Activated naive CD4-positive, alpha-beta T cell treated with anti-CD3 and anti-CD28 coated beads for 36 hours (primary cell): ENCODE measurements at regions of chr13 and their contacts with region 1.

Region 1: GRCh38 chr13:97855570-97856303 is 97.7 kb upstream of the IPO5 start:
- DNase-seq: peak; percentile 30
- H3K4me3 Mint-ChIP-seq: no peak overlapping the region
- H3K27ac Mint-ChIP-seq: no peak overlapping the region
- H3K4me1 Mint-ChIP-seq: no peaks in the 10 kb centered on the region
- H3K27me3 Mint-ChIP-seq: peaks cover 13% of the 10 kb centered on the region

Region 2: GRCh38 chr13:97719736-97720135 is 136.0 kb before region 1 on chr13:
- CTCF ChIA-PET with region 1: no interaction called
- intact Hi-C with region 1: no loop called
- DNase-seq: no peak
- H3K4me3 Mint-ChIP-seq: no peak overlapping the region
- H3K27ac Mint-ChIP-seq: no peak overlapping the region
- H3K4me1 Mint-ChIP-seq: no peaks in the 10 kb centered on the region
- H3K27me3 Mint-ChIP-seq: peaks cover 6% of the 10 kb centered on the region

Region 3: GRCh38 chr13:97911311-97912128 is 55.8 kb after region 1 on chr13:
- CTCF ChIA-PET with region 1: interaction called, 7 read pairs
- intact Hi-C with region 1: loop called (anchors 2 kb)
- DNase-seq: peak; percentile 24
- H3K4me3 Mint-ChIP-seq: no peak overlapping the region
- H3K27ac Mint-ChIP-seq: no peak overlapping the region
- H3K4me1 Mint-ChIP-seq: no peaks in the 10 kb centered on the region
- H3K27me3 Mint-ChIP-seq: peaks cover 22% of the 10 kb centered on the region

Region 4: DNA sequence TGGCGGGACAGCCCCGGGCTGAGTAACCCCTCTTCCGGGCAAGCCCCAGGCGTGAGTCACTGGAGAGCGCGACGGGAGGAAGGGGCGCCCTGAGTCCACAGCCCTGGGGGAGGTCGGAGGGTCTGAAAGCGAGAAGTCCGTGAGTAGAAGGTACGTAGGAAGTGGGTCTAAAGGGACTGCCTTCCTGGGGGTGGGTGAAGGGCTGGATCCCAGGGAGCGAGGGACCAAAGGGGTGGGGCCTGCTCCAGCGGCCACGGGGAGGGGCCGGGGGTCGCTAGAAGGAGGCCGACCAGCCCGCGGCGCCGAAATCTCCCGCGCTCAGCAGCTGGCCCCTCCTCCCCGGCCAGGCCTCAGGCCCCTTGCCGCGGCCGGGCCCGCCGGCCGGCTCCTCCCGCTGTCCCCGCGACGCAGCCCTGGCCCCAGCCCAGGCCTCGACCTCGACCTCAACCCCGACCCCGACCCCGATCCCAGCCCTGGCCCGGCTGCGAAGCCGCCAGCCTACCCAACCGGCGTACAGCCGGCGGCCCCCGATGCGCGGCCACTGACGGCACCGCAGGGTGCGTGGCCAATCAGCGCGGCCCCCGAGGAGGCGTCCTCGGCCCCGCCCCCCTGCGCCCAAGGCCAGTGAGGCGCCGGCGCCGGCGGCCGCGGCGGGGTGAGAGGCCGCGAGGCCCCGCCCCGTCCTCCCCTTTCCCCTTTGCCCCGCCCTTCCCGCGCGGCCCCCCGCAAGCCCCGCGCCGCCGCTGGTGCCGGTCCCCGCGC is 120.3 kb after region 1 on chr13:
- CTCF ChIA-PET with region 1: no interaction called
- intact Hi-C with region 1: loop called (anchors 2 kb)
- DNase-seq: peak; percentile 89
- H3K4me3 Mint-ChIP-seq: peak overlapping the region; percentile 92
- H3K27ac Mint-ChIP-seq: peak overlapping the region; percentile 97
- H3K4me1 Mint-ChIP-seq: peaks cover 28% of the 10 kb centered on the region
- H3K27me3 Mint-ChIP-seq: no peaks in the 10 kb centered on the region

Region 5: GRCh38 chr13:98349731-98350305 is 494.1 kb after region 1 on chr13:
- CTCF ChIA-PET with region 1: interaction called, 4 read pairs
- intact Hi-C with region 1: loop called (anchors 1 kb)
- DNase-seq: no peak
- H3K4me3 Mint-ChIP-seq: no peak overlapping the region
- H3K27ac Mint-ChIP-seq: no peak overlapping the region
- H3K4me1 Mint-ChIP-seq: no peaks in the 10 kb centered on the region
- H3K27me3 Mint-ChIP-seq: no peaks in the 10 kb centered on the region

Region 6: GRCh38 chr13:98429977-98430736 is 574.4 kb after region 1 on chr13:
- CTCF ChIA-PET with region 1: interaction called, 4 read pairs
- intact Hi-C with region 1: loop called (anchors 1 kb)
- DNase-seq: no peak
- H3K4me3 Mint-ChIP-seq: no peak overlapping the region
- H3K27ac Mint-ChIP-seq: no peak overlapping the region
- H3K4me1 Mint-ChIP-seq: no peaks in the 10 kb centered on the region
- H3K27me3 Mint-ChIP-seq: peaks cover 2% of the 10 kb centered on the region

Region 7: GRCh38 chr13:98842864-98843481 is 987.2 kb after region 1 on chr13:
- CTCF ChIA-PET with region 1: no interaction called
- intact Hi-C with region 1: loop called (anchors 2 kb)
- DNase-seq: peak; percentile 85
- H3K4me3 Mint-ChIP-seq: no peak overlapping the region
- H3K27ac Mint-ChIP-seq: no peak overlapping the region
- H3K4me1 Mint-ChIP-seq: peaks cover 6% of the 10 kb centered on the region
- H3K27me3 Mint-ChIP-seq: no peaks in the 10 kb centered on the region